ENCODE measurements at regions of chr6 and their contacts with region 1.

Region 1: GRCh38 chr6:11346516-11346915 is 114.0 kb upstream of the NEDD9 start:
- DNase-seq: no peak
- H3K4me3 ChIP-seq: no peak overlapping the region
- H3K27ac ChIP-seq: no peak overlapping the region
- H3K4me1 ChIP-seq: peaks cover 18% of the 10 kb centered on the region
- H3K27me3 ChIP-seq: no peaks in the 10 kb centered on the region
- CTCF ChIP-seq: no peak

Region 2: DNA sequence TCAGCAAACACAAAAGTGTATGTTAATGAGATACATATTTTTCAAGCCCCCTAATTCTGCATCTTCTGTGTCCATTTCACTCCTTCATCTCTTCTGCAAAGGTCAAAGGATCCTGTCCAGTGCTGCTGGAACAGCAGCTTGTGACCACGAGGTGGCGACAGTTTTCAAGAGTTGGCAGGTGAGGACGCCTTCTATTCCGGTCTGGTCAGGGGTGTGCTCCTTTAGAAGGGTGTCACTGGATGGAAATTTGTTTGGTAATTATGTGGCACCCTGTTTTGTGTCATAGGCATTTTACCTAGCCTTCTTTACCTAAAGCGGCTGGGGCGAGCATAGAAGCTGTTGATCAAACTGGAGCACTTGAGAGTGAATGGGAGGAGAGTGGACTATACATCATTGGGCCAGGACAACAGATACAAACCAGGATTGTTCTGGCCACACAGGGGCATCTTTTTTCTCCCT is 202.1 kb before region 1 on chr6:
- CTCF ChIA-PET with region 1: no interaction called
- dilution Hi-C with region 1: no loop called
- in situ Hi-C with region 1: loop called in 1 of 2 experiments (anchors 10 kb)
- intact Hi-C with region 1: loop called (anchors 1 kb)
- DNase-seq: peak; percentile 70
- H3K4me3 ChIP-seq: no peak overlapping the region
- H3K27ac ChIP-seq: peak overlapping the region; percentile 79
- H3K4me1 ChIP-seq: peaks cover 46% of the 10 kb centered on the region
- H3K27me3 ChIP-seq: no peaks in the 10 kb centered on the region
- CTCF ChIP-seq: peak; percentile 94 to 96

Region 3: GRCh38 chr6:11207199-11207968 is 139.1 kb before region 1 on chr6:
- CTCF ChIA-PET with region 1: no interaction called
- dilution Hi-C with region 1: no loop called
- in situ Hi-C with region 1: no loop called
- intact Hi-C with region 1: loop called (anchors 1 kb)
- DNase-seq: peak; percentile 99
- H3K4me3 ChIP-seq: no peak overlapping the region
- H3K27ac ChIP-seq: peak overlapping the region; percentile 99
- H3K4me1 ChIP-seq: peaks cover 36% of the 10 kb centered on the region
- H3K27me3 ChIP-seq: no peaks in the 10 kb centered on the region
- CTCF ChIP-seq: no peak

Region 4: GRCh38 chr6:11232193-11232769 is 114.2 kb before region 1 on chr6 and contains the start of gene NEDD9:
- CTCF ChIA-PET with region 1: no interaction called
- dilution Hi-C with region 1: no loop called
- in situ Hi-C with region 1: loop called in 1 of 2 experiments (anchors 10 kb)
- intact Hi-C with region 1: loop called (anchors 1 kb)
- DNase-seq: peak; percentile 97
- H3K4me3 ChIP-seq: peak within 1 kb of the TSS; percentile 48 to 64 (median 54)
- H3K27ac ChIP-seq: peak within 1 kb of the TSS; percentile 97
- H3K4me1 ChIP-seq: peaks cover 39% of the 10 kb centered on the region
- H3K27me3 ChIP-seq: no peaks in the 10 kb centered on the region
- CTCF ChIP-seq: no peak
- total RNA-seq, gene NEDD9: 7.8 to 69.7 TPM

Region 5: GRCh38 chr6:11245381-11246256 is 100.9 kb before region 1 on chr6:
- CTCF ChIA-PET with region 1: no interaction called
- dilution Hi-C with region 1: no loop called
- in situ Hi-C with region 1: no loop called
- intact Hi-C with region 1: no loop called
- DNase-seq: no peak
- H3K4me3 ChIP-seq: no peak overlapping the region
- H3K27ac ChIP-seq: no peak overlapping the region
- H3K4me1 ChIP-seq: no peaks in the 10 kb centered on the region
- H3K27me3 ChIP-seq: no peaks in the 10 kb centered on the region
- CTCF ChIP-seq: no peak

Region 6: GRCh38 chr6:11363881-11364576 is 17.5 kb after region 1 on chr6:
- CTCF ChIA-PET with region 1: no interaction called
- dilution Hi-C with region 1: no loop called
- in situ Hi-C with region 1: no loop called
- intact Hi-C with region 1: loop called (anchors 2 kb)
- DNase-seq: peak; percentile 94
- H3K4me3 ChIP-seq: no peak overlapping the region
- H3K27ac ChIP-seq: peak overlapping the region; percentile 55
- H3K4me1 ChIP-seq: peaks cover 52% of the 10 kb centered on the region
- H3K27me3 ChIP-seq: no peaks in the 10 kb centered on the region
- CTCF ChIP-seq: no peak

Region 7: GRCh38 chr6:11434565-11435326 is 88.2 kb after region 1 on chr6:
- CTCF ChIA-PET with region 1: no interaction called
- dilution Hi-C with region 1: no loop called
- in situ Hi-C with region 1: no loop called
- intact Hi-C with region 1: no loop called
- DNase-seq: no peak
- H3K4me3 ChIP-seq: no peak overlapping the region
- H3K27ac ChIP-seq: no peak overlapping the region
- H3K4me1 ChIP-seq: peaks cover 31% of the 10 kb centered on the region
- H3K27me3 ChIP-seq: no peaks in the 10 kb centered on the region
- CTCF ChIP-seq: no peak

Region 8: DNA sequence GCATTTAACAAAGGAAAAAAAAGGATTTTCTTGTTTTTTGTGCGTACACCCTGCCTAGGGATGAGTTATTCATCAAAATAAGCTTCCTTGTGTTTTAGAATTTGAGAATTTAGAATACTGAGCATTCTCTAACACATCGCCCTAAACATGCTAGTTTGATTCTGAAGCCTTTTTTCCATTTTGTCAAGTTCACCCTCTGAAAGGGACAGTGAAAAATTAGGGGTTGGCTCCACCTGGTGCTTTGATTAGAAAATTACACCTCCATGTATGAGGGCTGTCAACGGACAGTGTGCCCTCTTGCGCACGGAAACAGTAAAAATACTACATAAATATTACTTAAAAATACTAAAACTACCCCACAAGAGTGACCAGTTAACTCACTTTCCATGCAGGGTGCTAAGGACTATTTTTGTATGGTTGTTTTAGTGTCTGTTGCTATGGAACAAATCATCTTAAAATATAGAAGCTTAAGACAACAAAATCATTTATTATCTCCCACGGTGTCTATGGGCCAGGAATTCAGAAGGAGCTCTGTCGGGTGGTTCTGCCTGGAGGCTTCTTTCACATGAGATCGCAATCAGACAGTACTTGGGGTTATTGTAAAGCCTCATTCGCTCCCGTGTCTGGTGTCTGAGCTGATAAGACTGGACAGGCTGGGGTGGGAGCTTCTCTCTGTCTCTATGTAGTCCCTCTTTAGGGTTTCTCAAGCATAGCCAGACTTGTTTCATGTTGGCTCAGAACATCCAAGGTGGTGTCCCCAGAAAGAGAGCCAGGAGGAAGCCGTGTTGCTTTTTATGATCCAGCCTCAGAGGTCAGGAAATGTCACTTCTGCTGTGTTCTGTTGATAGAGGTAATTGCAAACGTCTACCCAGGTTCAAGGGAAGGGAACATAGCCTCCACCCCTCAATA is 149.9 kb after region 1 on chr6:
- CTCF ChIA-PET with region 1: no interaction called
- dilution Hi-C with region 1: no loop called
- in situ Hi-C with region 1: no loop called
- intact Hi-C with region 1: loop called (anchors 2 kb)
- DNase-seq: peak; percentile 60
- H3K4me3 ChIP-seq: no peak overlapping the region
- H3K27ac ChIP-seq: peak overlapping the region; percentile 3
- H3K4me1 ChIP-seq: peaks cover 8% of the 10 kb centered on the region
- H3K27me3 ChIP-seq: no peaks in the 10 kb centered on the region
- CTCF ChIP-seq: peak; percentile 73 to 85

Region 9: DNA sequence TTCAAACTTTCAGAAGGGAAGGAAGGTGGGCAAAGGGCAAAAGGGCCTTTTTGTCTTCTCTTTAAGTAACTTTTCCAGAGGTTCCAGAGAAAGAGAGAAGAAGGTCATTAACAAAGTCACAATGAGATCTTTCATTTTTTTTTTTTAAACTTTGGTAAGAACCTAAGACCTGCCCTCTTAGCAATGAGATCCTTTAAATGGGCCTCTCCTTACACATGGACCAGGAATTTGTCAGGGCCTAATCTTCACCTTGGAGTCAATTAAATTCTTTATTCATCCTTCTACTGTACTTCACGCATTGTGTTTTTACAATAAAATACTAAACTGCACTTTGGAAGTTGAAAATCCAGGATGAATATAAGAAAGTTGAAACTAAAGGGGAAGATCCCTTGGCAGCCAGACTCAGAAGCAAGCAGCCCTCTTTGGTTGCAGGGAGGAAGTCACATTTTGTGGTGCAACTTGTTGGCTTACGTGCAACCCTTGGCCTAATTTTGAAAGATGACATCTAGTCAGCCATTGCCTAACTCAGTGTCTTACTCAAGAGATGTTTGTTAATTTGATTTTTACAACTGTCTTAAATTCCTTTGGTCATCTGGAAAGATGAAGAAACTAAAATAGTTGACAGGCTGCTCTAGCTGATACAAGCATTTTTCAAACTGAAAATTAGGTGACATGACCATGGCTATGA is 179.1 kb after region 1 on chr6:
- CTCF ChIA-PET with region 1: no interaction called
- dilution Hi-C with region 1: no loop called
- in situ Hi-C with region 1: no loop called
- intact Hi-C with region 1: no loop called
- DNase-seq: no peak
- H3K4me3 ChIP-seq: no peak overlapping the region
- H3K27ac ChIP-seq: no peak overlapping the region
- H3K4me1 ChIP-seq: no peaks in the 10 kb centered on the region
- H3K27me3 ChIP-seq: no peaks in the 10 kb centered on the region
- CTCF ChIP-seq: no peak